ENCODE measurements at regions of chr17 and their contacts with region 1.

Region 1: GRCh38 chr17:4833178-4833940 is at the start of gene MINK1:
- DNase-seq: peak; percentile 77 to 95
- H3K4me3 ChIP-seq: peak within 1 kb of the TSS; percentile 66
- H3K27ac ChIP-seq: peak within 1 kb of the TSS; percentile 91
- H3K4me1 ChIP-seq: peaks cover 18% of the 10 kb centered on the region
- H3K27me3 ChIP-seq: no peaks in the 10 kb centered on the region
- CTCF ChIP-seq: no peak
- total RNA-seq, gene MINK1: 160 and 190 TPM in 2 replicates

Region 2: DNA sequence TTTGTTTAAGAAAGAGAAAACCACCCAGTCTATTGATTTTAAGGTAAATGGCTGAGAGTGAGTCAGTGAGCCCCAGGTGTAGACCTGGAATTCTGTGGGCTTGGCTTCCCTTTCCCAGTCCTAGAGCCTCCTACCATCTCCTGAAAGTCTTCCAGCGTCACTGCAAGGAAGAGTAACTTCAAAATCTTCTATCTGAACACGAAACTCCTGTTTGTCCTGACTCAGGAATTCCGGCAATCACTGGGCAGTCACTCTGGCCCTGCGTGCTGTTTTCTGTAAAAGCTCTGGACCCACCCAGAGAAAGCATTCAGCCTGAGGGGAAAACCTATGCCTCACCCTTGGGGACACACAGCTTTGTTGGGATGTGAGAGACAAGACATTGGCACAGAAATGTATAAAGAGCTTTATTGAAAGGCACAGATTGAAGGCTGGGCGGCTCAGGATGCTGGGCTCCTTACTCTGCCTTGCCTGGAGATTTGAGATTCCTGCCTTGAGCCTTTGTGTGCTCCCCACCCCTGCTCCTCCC is 15.7 kb after region 1 on chr17:
- CTCF ChIA-PET with region 1: no interaction called
- POLR2A ChIA-PET with region 1: interaction called, 3 read pairs
- intact Hi-C with region 1: loop called (anchors 1 kb)
- DNase-seq: peak; percentile 92 to 99
- H3K4me3 ChIP-seq: peak overlapping the region; percentile 32; the same call in 1 of the 2 replicates
- H3K27ac ChIP-seq: peak overlapping the region; percentile 94
- H3K4me1 ChIP-seq: peaks cover 63% of the 10 kb centered on the region
- H3K27me3 ChIP-seq: no peaks in the 10 kb centered on the region
- CTCF ChIP-seq: no peak

Region 3: DNA sequence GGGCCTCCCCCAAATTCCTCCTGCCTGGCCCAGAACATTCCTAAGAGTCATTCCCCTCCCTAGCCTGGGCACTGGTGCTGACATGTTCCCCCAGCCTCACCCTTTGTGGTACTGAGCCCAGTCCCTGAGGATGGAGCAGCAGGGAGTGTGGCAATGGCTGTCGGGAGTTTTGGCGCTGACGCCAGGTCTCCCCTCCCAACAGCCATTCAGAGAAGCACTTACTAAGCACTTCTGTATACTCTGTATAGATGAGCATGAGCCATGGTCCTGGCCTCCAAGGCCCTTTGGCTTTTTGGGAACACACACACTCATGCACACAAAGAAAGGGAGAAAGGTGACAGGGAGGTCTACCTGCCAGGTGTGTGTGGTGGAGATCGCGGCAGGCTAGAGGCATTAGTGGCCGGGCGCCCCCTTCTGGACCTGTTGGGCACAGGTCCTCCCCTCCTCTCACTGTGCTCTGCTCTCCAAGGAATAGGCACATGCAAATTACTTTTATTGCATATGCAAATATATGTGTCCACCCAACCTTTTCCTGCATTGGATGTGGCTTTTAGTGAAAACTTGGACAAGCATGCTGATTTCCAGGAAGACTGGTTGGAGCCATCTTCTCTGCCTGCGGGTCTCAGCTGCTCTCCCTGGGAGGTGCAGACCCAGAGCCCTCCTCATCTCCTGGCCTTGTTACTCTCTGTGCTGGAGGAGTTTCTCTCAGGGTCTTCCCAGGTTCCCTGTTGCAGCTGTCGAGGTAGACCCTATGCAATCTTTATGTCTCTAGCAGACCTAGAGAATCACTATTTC is 48.6 kb after region 1 on chr17:
- CTCF ChIA-PET with region 1: no interaction called
- POLR2A ChIA-PET with region 1: no interaction called
- intact Hi-C with region 1: loop called (anchors 2 kb)
- DNase-seq: peak; percentile 60 to 76
- H3K4me3 ChIP-seq: no peak overlapping the region
- H3K27ac ChIP-seq: no peak overlapping the region
- H3K4me1 ChIP-seq: no peaks in the 10 kb centered on the region
- H3K27me3 ChIP-seq: no peaks in the 10 kb centered on the region
- CTCF ChIP-seq: peak; percentile 92

Region 4: GRCh38 chr17:4939796-4940624 is 106.7 kb after region 1 on chr17 and contains the starts of genes RNF167 and SLC25A11:
- CTCF ChIA-PET with region 1: no interaction called
- POLR2A ChIA-PET with region 1: no interaction called
- intact Hi-C with region 1: loop called (anchors 10 kb)
- DNase-seq: peak; percentile 98
- H3K4me3 ChIP-seq: peak within 1 kb of the TSS; percentile 93
- H3K27ac ChIP-seq: peak within 1 kb of the TSS; percentile 87
- H3K4me1 ChIP-seq: peaks cover 25% of the 10 kb centered on the region
- H3K27me3 ChIP-seq: no peaks in the 10 kb centered on the region
- CTCF ChIP-seq: no peak
- total RNA-seq, gene RNF167: 122 and 135 TPM in 2 replicates
- total RNA-seq, gene SLC25A11: 50.7 and 56.2 TPM in 2 replicates